ENCODE measurements at regions of chr18 and their contacts with region 1.

Region 1: GRCh38 chr18:59729781-59730180 is 32.6 kb upstream of the CCBE1 start:
- DNase-seq: peak; percentile 76 to 99
- H3K4me3 ChIP-seq: no peak overlapping the region; the same call in 1 of the 2 replicates
- H3K27ac ChIP-seq: peak overlapping the region; percentile 83
- H3K4me1 ChIP-seq: peaks cover 39% of the 10 kb centered on the region
- H3K27me3 ChIP-seq: no peaks in the 10 kb centered on the region
- CTCF ChIP-seq: no peak

Region 2: GRCh38 chr18:59718108-59718463 is 11.7 kb before region 1 on chr18:
- CTCF ChIA-PET with region 1: no interaction called
- POLR2A ChIA-PET with region 1: no interaction called
- intact Hi-C with region 1: loop called (anchors 1 kb)
- DNase-seq: peak; percentile 76 to 98
- H3K4me3 ChIP-seq: no peak overlapping the region
- H3K27ac ChIP-seq: peak overlapping the region; percentile 63
- H3K4me1 ChIP-seq: peaks cover 51% of the 10 kb centered on the region
- H3K27me3 ChIP-seq: no peaks in the 10 kb centered on the region
- CTCF ChIP-seq: no peak

Measured in PC-9 (cell line).